ENCODE measurements at regions of chr10 and their contacts with region 1.

Region 1: GRCh38 chr10:62816331-62817120 is at the start of gene EGR2:
- DNase-seq: peak; percentile 97
- H3K4me3 Mint-ChIP-seq: peak within 1 kb of the TSS; percentile 88
- H3K27ac Mint-ChIP-seq: peak within 1 kb of the TSS; percentile 100
- H3K4me1 Mint-ChIP-seq: peaks cover 40% of the 10 kb centered on the region
- H3K27me3 Mint-ChIP-seq: peaks cover 21% of the 10 kb centered on the region
- total RNA-seq, gene EGR2: 66.9 to 68.2 TPM

Region 2: DNA sequence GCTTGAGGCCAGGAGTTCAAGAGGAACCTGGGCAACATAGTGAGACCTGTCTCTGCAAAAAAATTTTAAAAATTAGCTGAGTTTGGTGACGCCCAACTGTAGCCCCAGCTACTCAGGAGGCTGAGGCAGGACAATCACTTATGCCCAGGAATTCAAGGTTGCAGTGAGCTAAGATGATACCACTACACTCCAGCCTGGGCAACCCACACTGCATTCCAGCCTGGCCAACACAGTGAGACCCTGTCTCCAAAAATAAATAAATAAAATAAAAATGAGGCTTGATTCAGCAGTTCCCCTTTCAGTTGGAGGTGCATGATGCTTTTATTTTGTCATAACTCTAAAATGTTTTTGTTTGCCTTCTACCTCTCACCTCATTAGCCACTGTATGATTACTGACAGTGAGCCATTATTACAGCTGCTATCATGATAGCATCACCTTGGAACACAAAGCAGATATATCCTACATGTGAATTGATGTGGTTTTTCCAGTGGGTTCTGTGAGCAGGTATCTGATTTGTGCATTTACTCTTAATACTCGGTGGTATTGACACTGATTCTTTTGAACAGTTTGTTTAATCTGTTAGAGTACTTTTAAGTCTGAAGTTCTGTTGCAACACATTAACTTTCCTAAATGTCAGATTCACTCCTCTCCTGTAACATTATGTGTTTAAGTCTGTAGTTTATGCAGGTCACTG is 865.9 kb before region 1 on chr10:
- CTCF ChIA-PET with region 1: no interaction called
- POLR2A ChIA-PET with region 1: no interaction called
- intact Hi-C with region 1: no loop called
- DNase-seq: no peak
- H3K4me3 Mint-ChIP-seq: no peak overlapping the region
- H3K27ac Mint-ChIP-seq: no peak overlapping the region
- H3K4me1 Mint-ChIP-seq: peaks cover 45% of the 10 kb centered on the region
- H3K27me3 Mint-ChIP-seq: no peaks in the 10 kb centered on the region

Region 3: DNA sequence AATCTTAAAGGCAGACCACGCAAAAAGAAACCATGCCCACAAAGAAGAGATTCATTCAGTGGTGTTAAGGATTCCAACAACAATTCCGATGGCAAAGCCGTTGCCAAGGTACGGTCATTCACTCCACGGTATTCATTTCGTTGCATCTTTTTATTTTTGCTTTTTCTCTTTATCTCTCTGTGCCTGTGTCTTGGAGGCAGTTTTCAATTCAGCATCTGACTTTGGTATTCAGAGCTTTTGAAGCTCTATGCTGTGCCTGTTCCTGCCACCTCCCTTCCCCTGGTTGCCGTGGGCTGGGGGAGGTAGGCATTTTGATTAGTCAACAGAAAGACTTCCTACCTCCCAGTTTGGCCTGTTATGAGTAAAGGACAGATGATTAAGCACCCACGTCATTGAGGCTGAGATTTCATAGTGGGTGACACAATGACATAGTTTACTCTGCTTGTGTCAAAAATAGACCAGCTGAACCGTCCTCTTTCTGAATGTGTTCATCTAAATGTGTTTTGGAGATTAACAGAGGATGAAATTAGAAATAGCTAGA is 765.6 kb before region 1 on chr10:
- CTCF ChIA-PET with region 1: no interaction called
- POLR2A ChIA-PET with region 1: interaction called, 3 read pairs
- intact Hi-C with region 1: loop called (anchors 1 kb)
- DNase-seq: peak; percentile 91
- H3K4me3 Mint-ChIP-seq: peak overlapping the region; percentile 94
- H3K27ac Mint-ChIP-seq: peak overlapping the region; percentile 96
- H3K4me1 Mint-ChIP-seq: peaks cover 71% of the 10 kb centered on the region
- H3K27me3 Mint-ChIP-seq: no peaks in the 10 kb centered on the region

Region 4: GRCh38 chr10:62545160-62546066 is 271.1 kb before region 1 on chr10:
- CTCF ChIA-PET with region 1: no interaction called
- POLR2A ChIA-PET with region 1: no interaction called
- intact Hi-C with region 1: no loop called
- DNase-seq: no peak
- H3K4me3 Mint-ChIP-seq: no peak overlapping the region
- H3K27ac Mint-ChIP-seq: no peak overlapping the region
- H3K4me1 Mint-ChIP-seq: no peaks in the 10 kb centered on the region
- H3K27me3 Mint-ChIP-seq: no peaks in the 10 kb centered on the region

Region 5: DNA sequence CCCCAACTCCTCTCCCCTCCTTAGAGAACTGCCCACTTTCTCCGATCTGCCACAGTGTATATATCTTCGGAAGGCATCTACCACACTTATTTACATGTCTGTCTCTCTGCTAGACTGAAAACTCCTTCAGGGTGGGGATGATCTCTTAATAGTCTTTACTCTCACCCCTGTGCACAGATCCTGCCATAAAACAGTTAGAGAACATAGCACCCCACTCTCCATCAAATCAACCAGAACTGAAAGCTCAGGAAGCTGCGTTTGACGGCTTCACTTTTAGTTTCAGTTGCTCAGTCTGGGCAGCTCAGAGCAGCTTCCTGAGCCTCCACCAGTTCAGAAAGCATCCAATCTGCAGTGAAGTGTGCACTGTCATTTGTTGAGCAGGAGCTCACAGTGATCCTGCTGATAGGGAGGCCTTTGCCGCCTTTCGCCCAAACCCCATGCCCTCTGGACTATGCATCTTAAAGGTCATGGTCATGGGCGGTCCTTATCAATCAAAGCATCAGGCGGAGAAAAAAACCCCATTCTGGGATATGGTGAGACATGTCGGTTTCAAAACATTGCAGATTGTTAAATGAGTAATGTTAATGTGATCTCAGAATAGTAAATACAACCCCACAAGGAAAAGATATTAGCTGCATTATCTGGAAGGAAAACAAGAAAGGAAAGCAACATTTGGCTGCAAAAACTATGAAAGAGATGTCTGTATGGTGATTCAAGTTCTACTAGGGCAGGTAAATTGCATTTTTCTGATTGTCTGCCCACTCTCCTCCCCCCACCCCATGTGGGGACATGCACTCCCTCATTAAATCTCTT is 179.1 kb before region 1 on chr10:
- CTCF ChIA-PET with region 1: interaction called, 12 read pairs
- POLR2A ChIA-PET with region 1: interaction called, 20 read pairs
- intact Hi-C with region 1: loop called (anchors 1 kb)
- DNase-seq: peak; percentile 84
- H3K4me3 Mint-ChIP-seq: no peak overlapping the region
- H3K27ac Mint-ChIP-seq: no peak overlapping the region
- H3K4me1 Mint-ChIP-seq: peaks cover 26% of the 10 kb centered on the region
- H3K27me3 Mint-ChIP-seq: no peaks in the 10 kb centered on the region

Region 6: GRCh38 chr10:62748386-62748785 is 68.1 kb before region 1 on chr10:
- CTCF ChIA-PET with region 1: interaction called, 5 read pairs
- POLR2A ChIA-PET with region 1: interaction called, 5 read pairs
- intact Hi-C with region 1: loop called (anchors 1 kb)
- DNase-seq: no peak
- H3K4me3 Mint-ChIP-seq: peak overlapping the region; percentile 12
- H3K27ac Mint-ChIP-seq: peak overlapping the region; percentile 59
- H3K4me1 Mint-ChIP-seq: peaks cover 25% of the 10 kb centered on the region
- H3K27me3 Mint-ChIP-seq: no peaks in the 10 kb centered on the region

Region 7: GRCh38 chr10:62788861-62789467 is 27.6 kb before region 1 on chr10:
- CTCF ChIA-PET with region 1: no interaction called
- POLR2A ChIA-PET with region 1: no interaction called
- intact Hi-C with region 1: no loop called
- DNase-seq: no peak
- H3K4me3 Mint-ChIP-seq: no peak overlapping the region
- H3K27ac Mint-ChIP-seq: no peak overlapping the region
- H3K4me1 Mint-ChIP-seq: no peaks in the 10 kb centered on the region
- H3K27me3 Mint-ChIP-seq: peaks cover 5% of the 10 kb centered on the region

Region 8: DNA sequence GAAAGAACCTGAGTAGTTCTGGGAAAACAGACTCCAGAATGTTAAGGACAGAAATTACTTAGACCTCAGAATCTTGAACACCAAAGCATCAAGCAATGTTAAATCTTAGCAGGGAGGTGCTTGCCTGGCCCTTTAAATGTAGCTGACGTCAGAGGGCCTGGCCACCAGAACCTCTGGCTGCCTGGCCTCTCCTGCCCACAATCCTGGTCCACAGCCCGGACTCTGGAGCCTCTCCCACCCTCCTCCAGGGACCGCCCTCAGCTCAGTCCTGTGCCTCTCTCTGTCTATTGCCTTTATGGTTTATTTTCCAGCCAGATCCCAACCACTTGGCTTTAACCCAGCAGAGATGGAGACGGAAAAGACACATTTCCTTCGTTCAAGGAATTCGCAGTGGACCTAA is 41.8 kb after region 1 on chr10:
- CTCF ChIA-PET with region 1: interaction called, 33 read pairs
- POLR2A ChIA-PET with region 1: interaction called, 21 read pairs
- intact Hi-C with region 1: loop called (anchors 1 kb)
- DNase-seq: no peak
- H3K4me3 Mint-ChIP-seq: no peak overlapping the region
- H3K27ac Mint-ChIP-seq: no peak overlapping the region
- H3K4me1 Mint-ChIP-seq: peaks cover 61% of the 10 kb centered on the region
- H3K27me3 Mint-ChIP-seq: peaks cover 9% of the 10 kb centered on the region

Region 9: GRCh38 chr10:63083904-63084689 is 267.6 kb after region 1 on chr10:
- CTCF ChIA-PET with region 1: interaction called, 42 read pairs
- POLR2A ChIA-PET with region 1: no interaction called
- intact Hi-C with region 1: loop called (anchors 2 kb)
- DNase-seq: peak; percentile 51
- H3K4me3 Mint-ChIP-seq: no peak overlapping the region
- H3K27ac Mint-ChIP-seq: no peak overlapping the region
- H3K4me1 Mint-ChIP-seq: peaks cover 2% of the 10 kb centered on the region
- H3K27me3 Mint-ChIP-seq: peaks cover 8% of the 10 kb centered on the region

Region 10: DNA sequence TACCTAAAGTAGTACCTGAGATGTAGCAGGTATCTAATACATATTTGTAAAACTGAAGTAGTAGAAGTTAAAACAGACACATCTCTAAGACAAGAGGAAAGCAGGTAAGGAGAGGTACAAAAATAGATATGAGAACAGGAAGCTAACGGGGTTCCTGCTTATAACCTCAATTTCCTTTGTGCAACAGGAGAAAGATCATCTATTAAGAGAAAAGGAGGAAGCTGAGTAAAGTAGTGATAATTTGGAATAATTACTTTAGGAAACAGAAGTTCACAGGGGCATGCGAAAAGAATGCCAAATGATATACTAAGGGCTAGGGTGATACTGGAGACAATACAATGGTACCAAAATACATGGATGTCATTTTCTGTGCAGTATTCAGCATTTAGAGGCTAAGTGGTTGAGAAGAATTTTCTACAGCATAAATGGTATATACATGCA is 425.3 kb after region 1 on chr10:
- CTCF ChIA-PET with region 1: no interaction called
- POLR2A ChIA-PET with region 1: no interaction called
- intact Hi-C with region 1: no loop called
- DNase-seq: no peak
- H3K4me3 Mint-ChIP-seq: peak overlapping the region; percentile 24
- H3K27ac Mint-ChIP-seq: peak overlapping the region; percentile 73
- H3K4me1 Mint-ChIP-seq: peaks cover 74% of the 10 kb centered on the region
- H3K27me3 Mint-ChIP-seq: no peaks in the 10 kb centered on the region

Region 11: GRCh38 chr10:63521416-63522276 is 705.1 kb after region 1 on chr10:
- CTCF ChIA-PET with region 1: no interaction called
- POLR2A ChIA-PET with region 1: no interaction called
- intact Hi-C with region 1: loop called (anchors 10 kb)
- DNase-seq: peak; percentile 64
- H3K4me3 Mint-ChIP-seq: peak overlapping the region; percentile 87
- H3K27ac Mint-ChIP-seq: peak overlapping the region; percentile 92
- H3K4me1 Mint-ChIP-seq: peaks cover 63% of the 10 kb centered on the region
- H3K27me3 Mint-ChIP-seq: no peaks in the 10 kb centered on the region